MCF 10A (cell line): ENCODE measurements at regions of chr11 and their contacts with region 1.

Region 1: GRCh38 chr11:1832211-1832919 is 2.4 kb upstream of the SYT8 start:
- DNase-seq: no peak
- H3K4me3 Mint-ChIP-seq: no peak overlapping the region
- H3K27ac Mint-ChIP-seq: no peak overlapping the region
- H3K4me1 Mint-ChIP-seq: peaks cover 56% of the 10 kb centered on the region
- H3K27me3 Mint-ChIP-seq: no peaks in the 10 kb centered on the region
- CTCF ChIP-seq: peak; percentile 97

Region 2: DNA sequence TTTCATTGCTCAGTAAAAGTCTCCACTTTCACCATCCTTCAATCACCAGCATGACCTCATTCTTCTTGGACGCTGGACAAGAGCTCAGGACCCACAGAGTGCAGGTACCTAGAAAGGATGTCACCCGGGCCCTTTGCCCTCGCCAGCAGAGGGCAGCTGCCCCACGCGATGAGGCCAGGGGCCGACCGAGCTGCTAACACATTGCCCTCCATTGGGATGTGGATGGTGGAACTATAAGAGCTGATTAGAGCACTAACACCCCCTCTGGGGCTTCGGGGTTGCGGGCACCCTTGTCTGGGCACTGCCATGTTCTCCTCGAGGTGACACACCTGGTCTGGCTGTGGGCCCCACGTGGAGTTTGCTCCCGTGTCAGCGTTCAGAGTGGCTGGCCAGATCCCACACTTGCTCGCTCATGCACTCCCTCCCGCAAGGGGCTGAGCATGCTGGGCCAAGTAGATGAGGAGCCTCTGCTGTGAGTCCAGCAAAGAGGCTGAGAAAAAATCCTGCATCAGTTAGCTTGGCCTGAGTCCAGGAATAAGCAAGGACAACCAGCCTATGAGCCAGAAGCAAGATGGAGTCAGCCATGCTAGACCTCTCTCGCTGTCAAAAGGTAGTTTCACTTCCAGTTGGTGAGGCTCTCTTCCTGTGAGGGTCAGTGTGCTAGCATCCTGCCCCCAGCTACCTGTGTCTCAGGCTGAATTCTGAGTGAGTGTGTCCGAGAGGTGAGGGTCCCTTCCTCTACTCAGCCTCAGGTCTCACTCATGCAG is 125.5 kb before region 1 on chr11:
- CTCF ChIA-PET with region 1: interaction called, 14 read pairs
- POLR2A ChIA-PET with region 1: interaction called, 3 read pairs
- intact Hi-C with region 1: no loop called
- DNase-seq: peak; percentile 29
- H3K4me3 Mint-ChIP-seq: no peak overlapping the region
- H3K27ac Mint-ChIP-seq: no peak overlapping the region
- H3K4me1 Mint-ChIP-seq: peaks cover 5% of the 10 kb centered on the region
- H3K27me3 Mint-ChIP-seq: peaks cover 22% of the 10 kb centered on the region
- CTCF ChIP-seq: no peak

Region 3: DNA sequence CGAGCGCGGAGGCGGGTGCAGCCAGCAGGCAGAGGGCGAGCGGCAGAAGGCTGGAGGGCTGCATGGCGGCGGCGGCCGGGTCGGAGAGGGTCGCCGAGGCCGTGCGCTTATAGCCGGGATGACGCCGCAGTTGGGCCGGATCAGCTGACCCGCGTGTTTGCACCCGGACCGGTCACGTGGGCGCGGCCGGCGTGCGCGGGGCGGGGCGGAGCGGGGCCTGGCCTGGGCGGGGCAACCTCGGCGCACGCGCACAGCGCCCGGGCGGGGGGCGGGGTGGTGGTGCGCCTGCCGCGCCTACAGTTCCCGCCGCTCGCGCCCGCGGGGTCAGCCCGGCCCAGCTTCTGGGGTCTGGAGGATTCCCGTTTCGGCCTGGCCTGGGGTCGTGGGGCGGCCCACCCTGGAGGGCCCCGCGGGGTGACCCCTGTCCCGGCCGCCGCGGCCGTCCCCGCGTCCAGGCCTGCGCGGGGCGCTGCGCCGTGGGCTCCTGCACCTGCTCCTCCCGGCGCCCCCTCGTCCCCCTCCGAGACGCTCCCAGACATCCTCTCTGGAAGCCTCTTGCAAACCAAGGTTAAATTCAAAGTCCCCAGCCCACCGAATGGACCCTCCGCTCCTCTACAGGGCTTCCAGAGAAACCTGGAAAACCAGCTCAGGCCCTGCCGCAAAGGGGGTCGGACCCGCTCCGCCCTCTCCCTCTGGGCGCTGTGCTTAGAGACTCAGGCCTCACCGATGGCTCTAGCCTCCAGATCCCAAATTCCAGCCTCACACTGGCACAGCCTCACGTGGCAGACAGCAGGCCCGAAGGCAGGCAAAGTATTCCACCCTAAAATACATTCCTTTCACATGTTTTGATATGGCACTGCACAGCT is 68.3 kb before region 1 on chr11 and contains the start of gene CTSD:
- CTCF ChIA-PET with region 1: interaction called, 45 read pairs
- POLR2A ChIA-PET with region 1: interaction called, 115 read pairs
- intact Hi-C with region 1: loop called (anchors 1 kb)
- DNase-seq: peak; percentile 76
- H3K4me3 Mint-ChIP-seq: peak within 1 kb of the TSS; percentile 77
- H3K27ac Mint-ChIP-seq: peak within 1 kb of the TSS; percentile 39
- H3K4me1 Mint-ChIP-seq: peaks cover 10% of the 10 kb centered on the region
- H3K27me3 Mint-ChIP-seq: no peaks in the 10 kb centered on the region
- CTCF ChIP-seq: no peak
- total RNA-seq, gene CTSD: 366 and 367 TPM in 2 replicates

Region 4: GRCh38 chr11:1820463-1821325 is 11.7 kb before region 1 on chr11:
- CTCF ChIA-PET with region 1: interaction called, 12 read pairs
- POLR2A ChIA-PET with region 1: interaction called, 17 read pairs
- intact Hi-C with region 1: no loop called
- DNase-seq: peak; percentile 58
- H3K4me3 Mint-ChIP-seq: no peak overlapping the region
- H3K27ac Mint-ChIP-seq: peak overlapping the region; percentile 1
- H3K4me1 Mint-ChIP-seq: peaks cover 18% of the 10 kb centered on the region
- H3K27me3 Mint-ChIP-seq: no peaks in the 10 kb centered on the region
- CTCF ChIP-seq: no peak

Region 5: GRCh38 chr11:1876361-1877063 is 44.1 kb after region 1 on chr11:
- CTCF ChIA-PET with region 1: interaction called, 10 read pairs
- POLR2A ChIA-PET with region 1: interaction called, 3 read pairs
- intact Hi-C with region 1: loop called (anchors 5 kb)
- DNase-seq: peak; percentile 80
- H3K4me3 Mint-ChIP-seq: peak overlapping the region; percentile 73
- H3K27ac Mint-ChIP-seq: peak overlapping the region; percentile 83
- H3K4me1 Mint-ChIP-seq: peaks cover 29% of the 10 kb centered on the region
- H3K27me3 Mint-ChIP-seq: no peaks in the 10 kb centered on the region
- CTCF ChIP-seq: peak; percentile 62

Region 6: GRCh38 chr11:1959786-1960185 is 127.4 kb after region 1 on chr11:
- CTCF ChIA-PET with region 1: no interaction called
- POLR2A ChIA-PET with region 1: no interaction called
- intact Hi-C with region 1: no loop called
- DNase-seq: no peak
- H3K4me3 Mint-ChIP-seq: no peak overlapping the region
- H3K27ac Mint-ChIP-seq: no peak overlapping the region
- H3K4me1 Mint-ChIP-seq: no peaks in the 10 kb centered on the region
- H3K27me3 Mint-ChIP-seq: no peaks in the 10 kb centered on the region
- CTCF ChIP-seq: no peak

Region 7: DNA sequence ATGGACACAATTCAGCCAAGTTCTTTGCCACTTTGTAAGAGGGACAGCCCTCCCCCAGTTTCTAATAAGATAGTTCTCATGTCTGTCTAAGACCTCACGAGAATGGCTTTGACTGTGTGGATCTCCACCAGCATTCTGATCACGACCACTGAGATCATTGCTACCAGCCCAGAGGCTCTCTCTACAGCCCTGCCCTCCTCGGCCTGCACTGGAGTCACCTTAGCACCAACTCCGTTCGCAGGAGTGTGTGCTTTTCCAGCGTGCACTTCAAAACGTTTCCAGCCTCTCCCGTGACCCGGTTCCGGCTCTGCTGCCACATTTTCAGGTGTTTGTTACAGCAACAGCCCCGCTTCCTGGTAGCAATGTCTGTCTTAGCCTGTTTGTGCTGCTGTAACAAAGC is 495.7 kb after region 1 on chr11:
- CTCF ChIA-PET with region 1: no interaction called
- POLR2A ChIA-PET with region 1: no interaction called
- intact Hi-C with region 1: no loop called
- DNase-seq: no peak
- H3K4me3 Mint-ChIP-seq: no peak overlapping the region
- H3K27ac Mint-ChIP-seq: no peak overlapping the region
- H3K4me1 Mint-ChIP-seq: peaks cover 7% of the 10 kb centered on the region
- H3K27me3 Mint-ChIP-seq: no peaks in the 10 kb centered on the region
- CTCF ChIP-seq: no peak